ENCODE measurements at regions of chr1 and their contacts with region 1.

Region 1: DNA sequence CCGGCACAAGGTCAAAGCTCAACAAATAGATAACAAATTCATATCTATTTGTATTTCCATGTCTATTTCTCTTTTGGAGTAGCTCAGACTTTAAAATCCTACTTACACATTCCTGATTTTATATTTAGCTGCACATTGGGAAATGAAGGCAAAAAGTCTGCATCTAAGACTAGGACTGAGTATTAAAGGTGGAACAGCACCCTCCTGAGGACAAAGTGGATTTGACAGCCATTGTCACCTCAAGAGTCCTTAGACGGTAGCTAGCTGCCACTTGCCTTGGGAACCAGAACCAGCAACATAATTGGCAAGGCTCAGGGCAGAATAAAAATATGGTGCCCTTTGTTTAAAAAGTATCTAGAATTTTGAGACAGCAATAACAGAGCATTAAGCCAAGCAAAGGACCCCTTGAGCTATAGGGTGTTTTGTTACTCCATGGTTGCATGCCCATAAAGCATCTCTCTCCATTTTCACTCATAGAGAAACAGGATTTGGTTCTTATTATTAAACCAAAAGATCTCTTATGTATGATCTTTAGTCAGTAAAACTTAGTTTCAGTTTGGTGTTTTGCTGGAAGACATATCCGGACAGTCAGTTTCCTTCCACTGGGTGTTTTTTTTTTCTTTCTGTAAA is 30.0 kb upstream of the SGIP1 start:
- DNase-seq: peak; percentile 53
- H3K4me3 ChIP-seq: no peak overlapping the region; a peak in 1 of 4 replicates
- H3K27ac ChIP-seq: peak overlapping the region in 1 of 2 experiments; percentile 86; a peak in 2 of 4 replicates
- H3K4me1 ChIP-seq: peaks cover 8 to 16% of the 10 kb centered on the region in 2 experiments; a peak in 3 of 4 replicates
- H3K27me3 ChIP-seq: no peaks in the 10 kb centered on the region
- CTCF ChIP-seq: peak; percentile 85
- EP300 ChIP-seq: peak in 1 of 2 experiments; percentile 46; a peak in 1 of 4 replicates
- RAD21 ChIP-seq: peak; percentile 97

Region 2: GRCh38 chr1:66446261-66447001 is 57.5 kb before region 1 on chr1:
- CTCF ChIA-PET with region 1: interaction called, 198 read pairs
- POLR2A ChIA-PET with region 1: interaction called, 6 read pairs
- DNase-seq: peak; percentile 64
- H3K4me3 ChIP-seq: no peak overlapping the region; a peak in 1 of 4 replicates
- H3K27ac ChIP-seq: peak overlapping the region; percentile 21 to 99; a peak in 3 of 4 replicates
- H3K4me1 ChIP-seq: peaks cover 17 to 36% of the 10 kb centered on the region in 2 experiments; a peak in 3 of 4 replicates
- H3K27me3 ChIP-seq: no peaks in the 10 kb centered on the region
- CTCF ChIP-seq: peak; percentile 86
- EP300 ChIP-seq: no peak
- RAD21 ChIP-seq: peak; percentile 98

Region 3: DNA sequence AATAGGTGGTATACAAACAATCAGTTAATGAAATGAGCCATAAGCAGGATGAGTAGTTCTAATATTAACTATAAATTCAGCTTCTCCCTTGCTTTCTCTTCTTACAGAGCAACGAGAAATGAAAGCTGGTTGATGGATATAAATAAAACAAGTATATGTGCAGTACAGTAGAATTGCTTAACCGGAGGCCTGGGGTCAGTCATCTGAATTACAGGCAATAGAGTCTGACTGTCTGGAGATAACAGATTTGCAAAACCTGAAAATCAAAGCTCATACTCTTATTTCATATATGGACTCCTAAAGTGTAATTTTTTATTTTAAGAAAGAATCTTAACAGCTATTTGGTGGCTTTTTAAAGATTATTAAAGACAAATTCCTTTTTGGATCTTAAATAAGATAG is 13.1 kb before region 1 on chr1:
- CTCF ChIA-PET with region 1: interaction called, 38 read pairs
- POLR2A ChIA-PET with region 1: interaction called, 4 read pairs
- DNase-seq: peak; percentile 39
- H3K4me3 ChIP-seq: peak overlapping the region in 1 of 2 experiments; percentile 33; a peak in 2 of 4 replicates
- H3K27ac ChIP-seq: peak overlapping the region; percentile 95 to 100
- H3K4me1 ChIP-seq: peaks cover 46 to 71% of the 10 kb centered on the region in 2 experiments
- H3K27me3 ChIP-seq: no peaks in the 10 kb centered on the region
- CTCF ChIP-seq: no peak
- EP300 ChIP-seq: peak; percentile 77 to 98
- RAD21 ChIP-seq: peak; percentile 32

Region 4: GRCh38 chr1:66527686-66528085 is 23.7 kb after region 1 on chr1:
- CTCF ChIA-PET with region 1: interaction called, 14 read pairs
- POLR2A ChIA-PET with region 1: no interaction called
- DNase-seq: no peak
- H3K4me3 ChIP-seq: no peak overlapping the region
- H3K27ac ChIP-seq: peak overlapping the region in 1 of 2 experiments; percentile 71; a peak in 2 of 4 replicates
- H3K4me1 ChIP-seq: peaks cover 0 to 9% of the 10 kb centered on the region in 2 experiments; a peak in 2 of 4 replicates
- H3K27me3 ChIP-seq: no peaks in the 10 kb centered on the region
- CTCF ChIP-seq: no peak
- EP300 ChIP-seq: no peak
- RAD21 ChIP-seq: no peak

Region 5: GRCh38 chr1:66725885-66726665 is 222.1 kb after region 1 on chr1:
- CTCF ChIA-PET with region 1: interaction called, 26 read pairs
- POLR2A ChIA-PET with region 1: interaction called, 3 read pairs
- DNase-seq: peak; percentile 45
- H3K4me3 ChIP-seq: peak overlapping the region in 1 of 2 experiments; percentile 14; a peak in 1 of 4 replicates
- H3K27ac ChIP-seq: peak overlapping the region in 1 of 2 experiments; percentile 48; a peak in 2 of 4 replicates
- H3K4me1 ChIP-seq: peaks cover 5 to 14% of the 10 kb centered on the region in 2 experiments; a peak in 2 of 4 replicates
- H3K27me3 ChIP-seq: no peaks in the 10 kb centered on the region
- CTCF ChIP-seq: peak; percentile 98
- EP300 ChIP-seq: no peak
- RAD21 ChIP-seq: peak; percentile 88

Measured in SK-N-SH (cell line).